GM13976 (cell line): ENCODE measurements at regions of chr18 and their contacts with region 1.

Region 1: DNA sequence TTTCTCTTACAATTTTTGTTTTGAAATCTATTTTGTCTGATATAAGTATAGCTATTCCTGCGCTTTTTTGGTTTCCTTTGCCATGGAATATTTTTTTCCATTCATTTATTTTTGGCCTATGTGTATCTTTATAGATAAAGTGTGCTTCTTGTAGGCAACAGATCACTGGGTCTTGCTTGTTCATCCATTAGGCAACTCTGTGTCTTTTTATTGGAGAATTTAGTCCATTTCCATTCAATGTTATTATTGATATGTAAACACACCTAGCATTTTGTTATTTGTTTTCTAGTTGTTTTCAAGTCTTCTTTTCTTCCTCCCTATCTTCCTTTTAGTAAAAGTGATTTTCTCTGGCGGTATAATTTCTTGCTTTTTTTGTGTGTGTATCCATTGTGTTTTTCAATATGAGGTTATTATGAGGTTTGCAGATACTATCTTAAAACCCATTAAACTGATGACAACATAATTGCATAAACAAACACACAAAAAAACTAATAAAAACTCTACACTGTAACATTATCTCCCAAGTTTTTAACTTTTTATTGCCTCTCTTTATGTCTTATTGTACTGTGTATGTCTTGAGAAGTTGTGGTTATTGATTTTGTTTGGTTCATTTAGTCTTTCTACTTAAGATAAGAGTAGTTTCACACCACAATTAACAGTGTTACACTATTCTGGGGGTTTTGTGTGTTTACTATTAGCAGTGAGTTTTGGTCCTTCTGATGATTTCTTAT is 71.6 kb downstream of the ANKRD62 start:
- DNase-seq: no peak
- CTCF ChIP-seq: no peak

Region 2: GRCh38 chr18:10658992-10659391 is 1506.2 kb before region 1 on chr18:
- in situ Hi-C with region 1: loop called (anchors 10 kb)
- DNase-seq: no peak
- CTCF ChIP-seq: no peak

Region 3: GRCh38 chr18:12403601-12404506 is 238.7 kb after region 1 on chr18:
- in situ Hi-C with region 1: no loop called
- DNase-seq: peak; percentile 10
- CTCF ChIP-seq: no peak